ENCODE measurements at regions of chr14 and their contacts with region 1.

Region 1: DNA sequence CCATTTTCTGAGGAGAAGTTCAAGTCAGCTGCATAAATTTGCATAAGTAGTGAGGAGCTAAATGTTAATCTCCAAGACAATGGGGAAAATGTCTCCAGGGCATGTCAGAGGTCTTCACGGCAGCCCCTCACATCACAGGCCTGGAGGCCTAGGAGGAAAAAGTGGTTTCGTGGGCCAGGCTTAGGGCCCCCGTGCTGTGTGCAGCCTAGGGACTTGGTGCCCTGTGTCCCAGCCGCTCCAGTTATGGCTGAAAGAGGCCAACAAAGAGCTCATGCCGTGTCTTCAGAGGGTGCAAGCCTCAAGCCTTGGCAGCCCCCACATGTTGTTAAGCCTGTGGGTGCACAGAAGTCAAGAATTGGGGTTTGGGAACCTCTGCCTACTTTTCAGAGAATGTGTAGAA is 41.9 kb upstream of the RD3L start:
- DNase-seq: no peak
- ATAC-seq: no peak
- H3K4me3 ChIP-seq: no peak overlapping the region
- H3K27ac ChIP-seq: no peak overlapping the region
- H3K4me1 ChIP-seq: no peaks in the 10 kb centered on the region
- H3K27me3 ChIP-seq: no peaks in the 10 kb centered on the region
- CTCF ChIP-seq: no peak

Region 2: GRCh38 chr14:103808403-103809001 is 175.7 kb before region 1 on chr14:
- CTCF ChIA-PET with region 1: interaction called, 14 read pairs
- POLR2A ChIA-PET with region 1: no interaction called
- in situ Hi-C with region 1: no loop called
- intact Hi-C with region 1: no loop called
- DNase-seq: peak; percentile 41
- ATAC-seq: peak; percentile 97
- H3K4me3 ChIP-seq: no peak overlapping the region
- H3K27ac ChIP-seq: no peak overlapping the region
- H3K4me1 ChIP-seq: no peaks in the 10 kb centered on the region
- H3K27me3 ChIP-seq: no peaks in the 10 kb centered on the region
- CTCF ChIP-seq: peak; percentile 90

Region 3: GRCh38 chr14:103999795-104000440 is 15.7 kb after region 1 on chr14:
- CTCF ChIA-PET with region 1: interaction called, 10 read pairs
- POLR2A ChIA-PET with region 1: no interaction called
- in situ Hi-C with region 1: no loop called
- intact Hi-C with region 1: no loop called
- DNase-seq: no peak
- ATAC-seq: no peak
- H3K4me3 ChIP-seq: no peak overlapping the region
- H3K27ac ChIP-seq: no peak overlapping the region
- H3K4me1 ChIP-seq: no peaks in the 10 kb centered on the region
- H3K27me3 ChIP-seq: no peaks in the 10 kb centered on the region; the same call in 1 of the 2 replicates
- CTCF ChIP-seq: no peak

Region 4: GRCh38 chr14:104157016-104157928 is 173.1 kb after region 1 on chr14:
- CTCF ChIA-PET with region 1: no interaction called
- POLR2A ChIA-PET with region 1: no interaction called
- in situ Hi-C with region 1: no loop called
- intact Hi-C with region 1: no loop called
- DNase-seq: no peak
- ATAC-seq: no peak; the same call in 1 of the 2 replicates
- H3K4me3 ChIP-seq: no peak overlapping the region
- H3K27ac ChIP-seq: no peak overlapping the region
- H3K4me1 ChIP-seq: no peaks in the 10 kb centered on the region
- H3K27me3 ChIP-seq: no peaks in the 10 kb centered on the region
- CTCF ChIP-seq: peak; percentile 46

Region 5: DNA sequence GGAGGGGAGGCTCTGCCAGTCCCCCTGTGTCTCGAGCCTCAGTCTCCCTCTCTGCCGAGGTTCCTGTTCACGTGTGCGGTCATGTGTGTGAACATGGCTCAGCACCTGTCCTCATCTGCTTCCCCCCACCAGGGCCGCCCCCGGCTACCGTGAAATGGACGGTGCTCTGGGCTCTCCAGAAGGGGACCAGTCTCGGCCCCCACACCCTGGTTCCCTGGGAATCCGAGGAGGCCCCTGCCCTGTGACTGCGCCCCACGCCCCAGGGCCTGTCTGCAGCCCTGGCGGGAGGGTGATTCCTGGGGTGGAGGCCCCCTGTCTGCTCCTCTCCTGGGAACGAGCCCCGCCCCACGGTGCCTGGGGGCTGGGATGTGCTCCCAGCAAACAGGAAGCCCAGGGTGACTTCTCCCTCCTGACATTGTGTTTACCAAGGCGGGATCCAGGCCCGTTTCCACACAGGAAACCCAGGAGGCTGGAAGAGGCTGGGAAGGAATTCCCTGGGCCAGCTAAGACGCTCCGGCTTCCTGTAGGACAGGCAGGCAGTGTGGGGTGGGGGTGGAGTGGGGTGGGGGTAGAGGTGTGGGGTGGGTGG is 200.8 kb after region 1 on chr14:
- CTCF ChIA-PET with region 1: no interaction called
- POLR2A ChIA-PET with region 1: no interaction called
- in situ Hi-C with region 1: no loop called
- intact Hi-C with region 1: no loop called
- DNase-seq: no peak
- ATAC-seq: peak; percentile 41; the same call in 1 of the 2 replicates
- H3K4me3 ChIP-seq: no peak overlapping the region
- H3K27ac ChIP-seq: no peak overlapping the region
- H3K4me1 ChIP-seq: no peaks in the 10 kb centered on the region
- H3K27me3 ChIP-seq: no peaks in the 10 kb centered on the region
- CTCF ChIP-seq: no peak